ENCODE measurements at regions of chr22 and their contacts with region 1.

Region 1: GRCh38 chr22:26502688-26503561 is 9.3 kb downstream of the TFIP11 start:
- DNase-seq: peak; percentile 94
- ATAC-seq: peak; percentile 93
- H3K4me3 Mint-ChIP-seq: peak overlapping the region; percentile 70
- H3K27ac Mint-ChIP-seq: peak overlapping the region; percentile 93
- H3K4me1 Mint-ChIP-seq: peaks cover 37% of the 10 kb centered on the region
- H3K27me3 Mint-ChIP-seq: no peaks in the 10 kb centered on the region

Region 2: DNA sequence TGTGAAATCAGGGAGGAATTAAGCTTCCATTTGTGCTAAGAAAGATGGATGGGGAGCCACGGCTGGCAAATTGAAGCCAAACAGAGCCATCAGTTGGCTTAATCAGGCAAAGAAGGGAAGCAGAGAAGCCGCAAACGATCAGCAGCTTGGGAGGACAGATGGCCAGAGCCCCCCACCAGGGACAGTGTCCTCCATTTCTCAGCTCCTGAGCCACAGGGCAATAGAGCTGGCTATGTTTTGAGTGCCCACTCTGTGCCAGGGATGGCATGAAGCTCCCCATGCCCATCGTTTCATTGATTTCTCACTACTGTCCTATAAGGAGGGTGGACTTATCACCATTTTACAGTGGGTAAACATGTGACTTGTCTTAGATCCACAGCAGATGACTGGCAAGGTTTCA is 200.2 kb before region 1 on chr22:
- CTCF ChIA-PET with region 1: no interaction called
- POLR2A ChIA-PET with region 1: no interaction called
- DNase-seq: no peak
- ATAC-seq: no peak
- H3K4me3 Mint-ChIP-seq: no peak overlapping the region
- H3K27ac Mint-ChIP-seq: no peak overlapping the region
- H3K4me1 Mint-ChIP-seq: no peaks in the 10 kb centered on the region
- H3K27me3 Mint-ChIP-seq: peaks cover 12% of the 10 kb centered on the region

Region 3: DNA sequence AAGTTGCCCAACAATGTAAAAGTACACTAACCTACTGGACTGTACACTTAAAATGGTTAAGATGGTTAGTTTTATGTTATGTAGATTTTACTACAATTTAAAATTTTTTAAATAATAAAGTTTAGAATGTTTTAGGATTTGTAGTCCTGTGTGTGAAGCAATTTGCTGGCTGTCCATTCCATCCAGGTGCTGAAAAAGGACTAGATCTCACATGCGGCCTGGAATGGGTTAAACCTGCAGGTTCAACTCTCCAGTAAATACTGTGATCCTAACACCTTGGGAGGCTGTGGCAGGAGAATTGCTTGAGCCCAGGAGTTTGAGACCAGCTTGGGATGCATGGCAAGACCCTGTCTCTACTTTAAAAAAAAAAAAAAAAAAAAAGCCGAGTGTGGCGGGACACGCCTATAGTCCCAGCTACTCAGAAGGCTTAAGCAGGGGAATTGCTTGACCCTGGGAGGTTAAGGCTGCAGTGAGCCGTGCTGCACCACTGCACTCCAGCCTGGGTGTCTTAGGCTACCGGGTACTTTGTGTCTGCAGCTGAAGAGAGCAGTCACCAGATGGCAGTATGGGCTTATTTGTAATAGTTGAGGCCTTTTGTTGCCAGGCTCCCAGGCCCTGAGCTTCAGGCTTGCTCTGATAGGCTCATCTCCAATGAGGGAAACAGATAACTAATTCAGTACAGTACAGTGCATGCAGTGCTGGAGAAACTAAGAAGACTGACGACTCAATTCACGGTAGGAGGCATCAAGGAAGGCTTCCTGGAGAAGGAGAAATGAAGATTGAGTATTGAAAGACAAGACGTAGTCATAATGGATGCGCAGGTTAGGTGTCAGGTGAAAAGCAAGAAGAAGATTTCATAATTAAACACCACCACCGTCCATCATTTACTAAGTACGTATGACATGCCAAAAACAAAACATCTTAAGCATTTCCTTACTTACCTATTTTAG is 138.6 kb before region 1 on chr22:
- CTCF ChIA-PET with region 1: interaction called, 13 read pairs
- POLR2A ChIA-PET with region 1: no interaction called
- DNase-seq: peak; percentile 70
- ATAC-seq: peak; percentile 91
- H3K4me3 Mint-ChIP-seq: no peak overlapping the region
- H3K27ac Mint-ChIP-seq: no peak overlapping the region
- H3K4me1 Mint-ChIP-seq: peaks cover 6% of the 10 kb centered on the region
- H3K27me3 Mint-ChIP-seq: peaks cover 14% of the 10 kb centered on the region

Region 4: DNA sequence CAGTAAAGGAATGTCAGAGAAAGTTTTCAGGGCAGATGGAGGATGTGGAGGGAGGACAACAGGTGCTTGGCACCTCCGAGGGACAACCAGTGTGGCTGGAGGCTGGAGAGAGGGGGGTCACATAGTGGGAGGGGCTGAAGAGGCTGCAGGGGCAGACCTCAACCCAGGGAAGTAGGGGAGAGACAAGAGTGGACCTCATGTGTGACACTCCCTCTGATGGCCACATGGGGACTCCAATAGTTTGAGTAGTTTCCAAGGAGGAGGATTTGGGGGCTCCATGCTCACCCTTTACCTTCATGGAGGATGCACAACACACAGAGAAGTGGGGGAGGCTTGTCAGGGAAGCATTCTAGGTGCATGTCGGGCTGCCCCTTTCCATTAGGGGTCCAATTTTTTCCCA is 109.0 kb before region 1 on chr22:
- CTCF ChIA-PET with region 1: no interaction called
- POLR2A ChIA-PET with region 1: no interaction called
- DNase-seq: no peak
- ATAC-seq: no peak
- H3K4me3 Mint-ChIP-seq: no peak overlapping the region
- H3K27ac Mint-ChIP-seq: no peak overlapping the region
- H3K4me1 Mint-ChIP-seq: no peaks in the 10 kb centered on the region
- H3K27me3 Mint-ChIP-seq: peaks cover 6% of the 10 kb centered on the region

Region 5: DNA sequence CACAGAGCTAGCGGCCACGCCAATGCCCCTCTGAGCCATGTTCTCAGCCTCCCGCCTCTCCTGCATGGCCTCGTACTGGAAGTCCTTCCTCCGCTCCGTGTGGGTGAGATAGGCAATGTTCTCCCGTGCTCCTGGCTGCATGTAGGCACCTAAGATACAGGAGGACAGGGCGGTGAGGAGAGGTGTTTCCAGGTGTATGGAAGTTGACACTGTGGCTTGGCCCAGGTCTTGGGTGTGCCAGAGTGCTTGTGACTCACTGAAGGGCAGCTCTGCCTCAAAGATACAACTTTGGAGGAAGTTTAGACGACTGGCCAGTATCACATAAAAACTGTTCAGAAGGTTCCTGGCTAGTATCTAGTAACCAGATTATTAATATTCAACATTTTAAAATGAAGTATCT is 10.7 kb before region 1 on chr22:
- CTCF ChIA-PET with region 1: interaction called, 40 read pairs
- POLR2A ChIA-PET with region 1: interaction called, 12 read pairs
- DNase-seq: no peak
- ATAC-seq: no peak
- H3K4me3 Mint-ChIP-seq: no peak overlapping the region
- H3K27ac Mint-ChIP-seq: no peak overlapping the region
- H3K4me1 Mint-ChIP-seq: peaks cover 17% of the 10 kb centered on the region
- H3K27me3 Mint-ChIP-seq: no peaks in the 10 kb centered on the region

Region 6: DNA sequence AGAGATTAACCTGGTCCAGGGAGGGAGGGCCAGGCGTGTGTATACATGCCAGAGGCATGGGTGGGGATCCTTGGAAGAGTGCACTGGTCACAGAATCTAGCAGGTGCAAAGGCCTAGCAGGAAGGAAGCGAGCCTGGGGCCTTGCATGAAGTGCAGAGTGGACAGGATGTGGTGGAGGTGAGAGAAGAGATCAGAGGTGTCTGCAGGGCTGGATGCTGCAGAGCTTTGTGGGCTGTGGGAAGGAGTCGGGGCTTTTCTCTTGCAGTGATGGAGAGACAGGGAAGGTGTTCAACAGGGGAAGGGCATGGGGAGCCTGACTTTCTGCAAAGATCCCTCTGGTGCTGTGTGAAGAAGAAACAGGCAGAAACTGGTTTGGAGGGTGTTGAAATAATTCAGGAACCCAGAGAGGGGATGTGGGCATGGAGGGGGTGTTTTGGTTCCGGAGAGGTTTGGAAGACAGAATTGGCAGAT is 89.5 kb after region 1 on chr22:
- CTCF ChIA-PET with region 1: interaction called, 22 read pairs
- POLR2A ChIA-PET with region 1: interaction called, 3 read pairs
- DNase-seq: peak; percentile 85
- ATAC-seq: peak; percentile 64
- H3K4me3 Mint-ChIP-seq: peak overlapping the region; percentile 59
- H3K27ac Mint-ChIP-seq: peak overlapping the region; percentile 83
- H3K4me1 Mint-ChIP-seq: peaks cover 69% of the 10 kb centered on the region
- H3K27me3 Mint-ChIP-seq: no peaks in the 10 kb centered on the region

Region 7: GRCh38 chr22:26648528-26649388 is 145.8 kb after region 1 on chr22:
- CTCF ChIA-PET with region 1: interaction called, 13 read pairs
- POLR2A ChIA-PET with region 1: interaction called, 4 read pairs
- DNase-seq: no peak
- ATAC-seq: no peak
- H3K4me3 Mint-ChIP-seq: peak overlapping the region; percentile 63
- H3K27ac Mint-ChIP-seq: peak overlapping the region; percentile 27
- H3K4me1 Mint-ChIP-seq: peaks cover 63% of the 10 kb centered on the region
- H3K27me3 Mint-ChIP-seq: peaks cover 10% of the 10 kb centered on the region

Region 8: DNA sequence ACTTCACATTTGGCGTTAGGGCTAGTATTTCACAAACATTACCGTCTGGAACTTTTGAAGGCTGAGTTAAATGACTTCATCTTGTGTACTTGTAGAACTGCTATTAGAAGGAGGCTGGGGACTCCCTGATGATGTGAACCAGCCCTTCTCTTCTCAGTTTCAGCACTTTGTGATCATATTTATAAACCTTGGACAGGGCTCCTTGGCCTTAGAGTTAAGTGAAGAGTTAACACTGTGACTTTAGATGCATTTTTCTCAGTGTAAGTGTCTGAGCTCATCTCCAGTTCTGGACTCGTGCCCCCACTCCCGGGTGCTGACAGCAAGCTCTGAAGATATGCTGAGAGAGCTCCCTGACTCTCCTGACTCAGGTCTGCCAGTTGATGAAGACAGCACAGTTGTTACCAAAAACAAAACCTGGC is 162.9 kb after region 1 on chr22:
- CTCF ChIA-PET with region 1: interaction called, 76 read pairs
- POLR2A ChIA-PET with region 1: interaction called, 8 read pairs
- DNase-seq: no peak
- ATAC-seq: peak; percentile 18
- H3K4me3 Mint-ChIP-seq: no peak overlapping the region
- H3K27ac Mint-ChIP-seq: peak overlapping the region; percentile 88
- H3K4me1 Mint-ChIP-seq: peaks cover 52% of the 10 kb centered on the region
- H3K27me3 Mint-ChIP-seq: no peaks in the 10 kb centered on the region